Cardiac septum (tissue), 1 donor: ENCODE measurements at regions of chr1 and their contacts with region 1.

Region 1: GRCh38 chr1:222643938-222644635 is 26.2 kb downstream of the MIA3 start:
- DNase-seq: peak; percentile 99

Region 2: DNA sequence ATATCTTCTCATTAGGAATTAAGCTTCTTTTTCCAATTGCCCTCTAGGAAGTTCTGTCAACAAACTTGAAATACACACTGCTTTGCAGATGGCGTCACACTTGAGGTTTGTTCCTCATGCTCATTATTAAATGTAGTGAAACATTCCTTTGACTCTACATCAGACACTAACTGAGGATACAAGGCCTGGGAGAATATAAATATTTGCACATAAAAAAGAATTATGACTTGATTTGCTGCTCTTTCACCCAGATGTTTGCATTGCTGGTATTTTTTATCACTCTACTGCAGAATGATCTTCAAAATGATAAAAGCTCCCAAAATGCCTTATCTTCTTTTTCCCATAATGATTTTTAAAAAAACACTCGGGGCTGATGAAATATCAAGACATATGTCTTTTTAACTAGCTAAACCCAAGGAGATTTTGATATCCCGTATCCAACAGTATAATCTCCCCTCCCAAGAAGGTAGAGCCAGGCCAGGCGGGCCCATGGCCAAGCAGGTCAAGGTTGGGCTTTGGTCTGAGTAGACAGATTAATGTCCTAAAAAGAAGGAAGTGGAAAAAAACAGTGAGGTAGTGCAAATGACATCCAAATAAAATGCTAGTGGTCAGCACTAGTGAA is 360.8 kb before region 1 on chr1:
- intact Hi-C with region 1: no loop called
- DNase-seq: no peak

Region 3: GRCh38 chr1:222589462-222590302 is 54.4 kb before region 1 on chr1 and contains the start of gene TAF1A:
- intact Hi-C with region 1: loop called (anchors 5 kb)
- DNase-seq: peak; percentile 93
- total RNA-seq, gene TAF1A: 3.9 TPM

Region 4: DNA sequence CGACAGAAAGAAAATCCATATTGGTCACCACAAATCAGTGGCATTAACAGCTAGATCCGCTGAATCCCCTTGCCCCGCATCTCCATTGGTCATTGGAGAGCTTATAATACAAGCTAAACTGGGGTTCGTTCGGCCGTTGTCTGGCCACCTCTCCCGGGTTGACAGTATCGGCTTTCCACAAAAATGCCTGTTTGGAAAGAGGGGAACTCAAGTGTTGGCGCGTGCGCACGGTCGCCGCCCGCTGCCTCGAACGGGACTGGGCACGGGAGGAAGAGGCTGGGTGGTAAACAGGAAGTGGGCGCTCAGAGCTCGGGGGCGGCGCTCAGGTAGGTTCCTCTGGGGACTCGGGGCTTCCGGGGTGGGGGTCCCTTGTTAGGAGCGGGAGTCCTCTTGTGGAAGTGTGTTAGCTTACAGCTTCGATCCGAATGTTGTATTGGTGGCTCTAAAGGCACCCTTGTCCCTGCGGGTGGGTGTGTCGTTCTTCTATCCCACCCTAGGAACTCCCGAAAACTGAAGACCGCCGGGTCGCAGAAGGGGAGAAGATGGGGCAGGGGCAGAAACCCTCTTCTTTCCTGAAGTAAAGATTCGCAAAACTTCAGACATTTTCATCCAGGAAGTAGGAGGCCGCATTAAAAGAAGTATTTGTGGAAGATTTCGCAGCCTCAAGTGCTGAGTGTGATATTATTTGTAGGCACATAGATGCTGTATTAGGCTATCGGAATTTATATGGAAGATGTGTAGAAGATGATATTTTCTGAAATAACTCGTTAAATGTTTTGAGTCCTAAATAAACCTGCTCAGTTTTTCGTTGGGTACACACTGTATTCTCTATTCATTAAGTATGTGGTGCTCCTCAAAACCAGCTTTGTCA is 69.2 kb after region 1 on chr1:
- intact Hi-C with region 1: loop called (anchors 1 kb)
- DNase-seq: peak; percentile 96